IMR-90 (cell line): ENCODE measurements at regions of chr9 and their contacts with region 1.

Region 1: DNA sequence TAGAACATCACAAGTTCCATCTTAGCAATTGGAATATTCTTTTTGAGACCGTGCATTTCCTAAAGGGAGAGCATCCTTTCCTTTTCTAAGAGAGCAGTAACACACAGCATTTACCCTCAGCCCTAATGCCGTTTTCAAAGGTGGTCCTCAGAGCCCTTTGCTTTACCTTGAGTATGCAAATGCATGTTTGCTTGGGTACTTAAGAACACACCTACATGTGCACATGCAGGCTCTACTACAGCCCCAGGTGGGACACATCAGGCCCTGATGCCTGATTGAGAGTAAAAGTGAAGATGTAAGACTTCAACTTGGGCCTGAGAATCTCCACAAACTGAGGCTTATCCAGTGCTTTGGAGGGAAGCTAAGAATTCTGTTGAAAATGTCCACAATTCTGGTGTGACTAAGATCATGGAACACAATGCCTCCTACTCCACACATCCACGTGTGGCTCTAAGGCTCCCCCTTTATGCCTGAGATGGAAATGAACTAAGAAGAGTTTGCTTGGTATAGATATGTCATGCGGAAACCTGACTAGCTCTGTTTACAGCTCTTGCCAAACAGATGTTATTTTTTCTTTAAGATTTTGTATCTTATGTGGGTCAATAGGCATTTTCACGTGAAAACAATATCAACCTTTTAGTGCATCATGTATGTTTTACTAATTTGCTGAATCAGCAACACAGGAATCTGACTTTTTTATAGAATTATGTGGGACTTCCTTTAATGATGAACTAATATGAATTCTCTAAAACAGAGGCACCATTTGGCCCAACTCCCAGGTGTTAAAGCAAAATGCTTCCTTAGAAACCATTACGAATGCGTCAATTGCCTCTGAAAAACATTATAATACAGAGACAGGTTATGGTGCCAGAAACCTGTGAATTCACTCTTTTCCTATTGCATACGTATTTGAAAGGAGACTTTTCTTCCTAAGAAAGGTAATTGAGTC is 48.9 kb upstream of the SLC2A8 start:
- DNase-seq: peak; percentile 75
- ATAC-seq: peak; percentile 95
- H3K4me3 ChIP-seq: no peak overlapping the region
- H3K27ac ChIP-seq: no peak overlapping the region
- H3K4me1 ChIP-seq: peaks cover 3% of the 10 kb centered on the region
- H3K27me3 ChIP-seq: no peaks in the 10 kb centered on the region
- CTCF ChIP-seq: peak; percentile 78
- POLR2A ChIP-seq: no peak
- RAD21 ChIP-seq: peak; percentile 79

Region 2: GRCh38 chr9:126939821-126940221 is 408.3 kb before region 1 on chr9:
- CTCF ChIA-PET with region 1: no interaction called
- POLR2A ChIA-PET with region 1: no interaction called
- dilution Hi-C with region 1: no loop called
- in situ Hi-C with region 1: no loop called
- intact Hi-C with region 1: loop called (anchors 1 kb)
- DNase-seq: no peak
- ATAC-seq: no peak
- H3K4me3 ChIP-seq: no peak overlapping the region
- H3K27ac ChIP-seq: no peak overlapping the region
- H3K4me1 ChIP-seq: peaks cover 2% of the 10 kb centered on the region; the same call in 1 of the 2 replicates
- H3K27me3 ChIP-seq: no peaks in the 10 kb centered on the region
- CTCF ChIP-seq: no peak
- POLR2A ChIP-seq: no peak
- RAD21 ChIP-seq: no peak

Region 3: GRCh38 chr9:127205183-127205470 is 143.0 kb before region 1 on chr9:
- CTCF ChIA-PET with region 1: interaction called, 4 read pairs
- POLR2A ChIA-PET with region 1: no interaction called
- dilution Hi-C with region 1: no loop called
- in situ Hi-C with region 1: no loop called
- intact Hi-C with region 1: loop called (anchors 2 kb)
- DNase-seq: peak; percentile 49
- ATAC-seq: peak; percentile 69
- H3K4me3 ChIP-seq: no peak overlapping the region
- H3K27ac ChIP-seq: no peak overlapping the region
- H3K4me1 ChIP-seq: peaks cover 2% of the 10 kb centered on the region; the same call in 1 of the 2 replicates
- H3K27me3 ChIP-seq: peaks cover 9% of the 10 kb centered on the region; the same call in 1 of the 2 replicates
- CTCF ChIP-seq: peak; percentile 49
- POLR2A ChIP-seq: no peak
- RAD21 ChIP-seq: peak; percentile 44

Region 4: DNA sequence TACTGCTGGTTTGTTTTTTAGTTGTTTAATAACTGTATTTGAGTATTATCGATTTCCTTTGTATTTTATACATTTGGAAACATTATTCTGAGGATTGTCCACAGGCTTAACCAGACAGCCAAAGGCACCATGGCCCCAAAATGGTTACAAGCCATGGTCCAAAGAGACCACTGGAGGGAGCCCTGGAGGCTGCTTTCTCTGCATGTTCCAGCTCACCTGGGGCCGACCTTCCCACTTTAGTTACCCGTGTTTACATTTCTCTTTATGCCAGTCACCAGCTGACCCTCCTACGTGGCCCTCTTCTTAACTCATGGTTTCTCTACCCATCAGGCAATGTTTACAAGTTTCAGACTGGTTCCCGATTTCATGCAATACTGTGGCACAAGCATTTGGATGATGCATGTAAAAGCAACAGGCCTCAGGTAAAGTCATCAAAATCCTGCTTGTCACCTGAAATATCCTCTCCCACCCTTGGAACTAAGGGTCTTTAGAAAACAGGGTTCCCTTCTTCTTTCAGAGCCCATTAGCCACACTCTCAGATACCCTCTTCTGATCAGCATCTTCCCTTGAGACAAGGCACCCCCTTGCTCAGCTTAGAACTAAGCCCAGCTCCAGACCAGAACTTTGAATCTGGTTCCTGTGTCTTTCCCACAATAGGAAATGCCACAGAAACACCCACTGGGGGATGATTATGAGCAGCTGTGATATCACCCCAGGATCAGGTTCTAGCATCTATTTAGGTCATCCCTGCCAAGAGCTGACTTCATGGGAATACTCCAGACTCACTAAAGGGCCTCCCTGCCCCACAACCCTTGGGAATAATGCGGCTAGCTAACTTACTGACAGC is 133.5 kb before region 1 on chr9:
- CTCF ChIA-PET with region 1: no interaction called
- POLR2A ChIA-PET with region 1: no interaction called
- dilution Hi-C with region 1: no loop called
- in situ Hi-C with region 1: no loop called
- intact Hi-C with region 1: loop called (anchors 1 kb)
- DNase-seq: peak; percentile 89
- ATAC-seq: peak; percentile 83
- H3K4me3 ChIP-seq: no peak overlapping the region
- H3K27ac ChIP-seq: no peak overlapping the region
- H3K4me1 ChIP-seq: peaks cover 6% of the 10 kb centered on the region; the same call in 1 of the 2 replicates
- H3K27me3 ChIP-seq: peaks cover 8% of the 10 kb centered on the region
- CTCF ChIP-seq: peak; percentile 72
- POLR2A ChIP-seq: no peak
- RAD21 ChIP-seq: peak; percentile 78

Region 5: GRCh38 chr9:128066495-128067153 is 718.5 kb after region 1 on chr9:
- CTCF ChIA-PET with region 1: no interaction called
- POLR2A ChIA-PET with region 1: no interaction called
- dilution Hi-C with region 1: no loop called
- in situ Hi-C with region 1: no loop called
- intact Hi-C with region 1: no loop called
- DNase-seq: no peak
- ATAC-seq: no peak
- H3K4me3 ChIP-seq: peak overlapping the region; percentile 44
- H3K27ac ChIP-seq: peak overlapping the region; percentile 65
- H3K4me1 ChIP-seq: peaks cover 10% of the 10 kb centered on the region
- H3K27me3 ChIP-seq: no peaks in the 10 kb centered on the region
- CTCF ChIP-seq: no peak
- POLR2A ChIP-seq: no peak
- RAD21 ChIP-seq: no peak